ENCODE measurements at regions of chr18 and their contacts with region 1.

Region 1: DNA sequence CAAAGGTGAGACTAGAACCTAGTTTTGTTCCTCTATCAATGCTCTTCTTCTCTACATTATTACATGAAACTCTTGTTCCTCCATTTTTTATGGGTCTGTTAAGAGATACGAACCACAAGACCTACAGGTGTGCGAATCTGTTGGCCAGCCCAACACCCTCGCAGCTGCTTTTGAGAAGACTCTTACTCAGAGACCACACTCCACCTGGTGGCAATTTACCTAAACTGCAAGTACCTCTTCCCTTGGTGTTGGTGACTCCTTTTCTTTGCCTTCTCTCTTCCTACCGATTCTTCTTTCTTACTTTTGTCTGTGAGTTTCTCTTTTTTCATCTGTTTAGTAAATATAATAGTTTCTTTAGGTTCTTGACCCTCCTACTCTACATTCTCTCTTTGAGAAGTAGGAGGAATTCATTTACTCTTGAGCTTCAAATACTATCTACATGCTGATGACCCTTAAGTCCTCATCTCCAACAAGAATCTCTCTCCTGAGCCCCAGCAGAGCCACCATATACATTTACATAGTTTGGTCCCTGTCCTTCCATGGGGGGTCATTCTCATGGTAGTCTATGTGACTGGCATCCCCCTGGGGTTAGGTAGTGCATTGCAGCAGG is 81.8 kb upstream of the GAREM1 start:
- DNase-seq: peak; percentile 76
- H3K4me3 ChIP-seq: no peak overlapping the region
- H3K27ac ChIP-seq: no peak overlapping the region
- H3K4me1 ChIP-seq: no peaks in the 10 kb centered on the region
- H3K27me3 ChIP-seq: no peaks in the 10 kb centered on the region
- CTCF ChIP-seq: peak; percentile 53 to 79 (median 75)
- POLR2A ChIP-seq: no peak

Region 2: GRCh38 chr18:32158108-32158624 is 394.4 kb before region 1 on chr18:
- intact Hi-C with region 1: loop called (anchors 5 kb)
- DNase-seq: peak; percentile 84
- H3K4me3 ChIP-seq: peak overlapping the region in 1 of 2 donors; percentile 12
- H3K27ac ChIP-seq: no peak overlapping the region
- H3K4me1 ChIP-seq: no peaks in the 10 kb centered on the region
- H3K27me3 ChIP-seq: no peaks in the 10 kb centered on the region
- CTCF ChIP-seq: peak; percentile 42 to 93 (median 90)
- POLR2A ChIP-seq: no peak

Region 3: GRCh38 chr18:32271672-32272208 is 280.8 kb before region 1 on chr18:
- intact Hi-C with region 1: loop called (anchors 5 kb)
- DNase-seq: peak; percentile 14
- H3K4me3 ChIP-seq: no peak overlapping the region
- H3K27ac ChIP-seq: no peak overlapping the region
- H3K4me1 ChIP-seq: no peaks in the 10 kb centered on the region
- H3K27me3 ChIP-seq: no peaks in the 10 kb centered on the region
- CTCF ChIP-seq: peak; percentile 18 to 81 (median 68)
- POLR2A ChIP-seq: no peak